Natural killer cell (primary cell): ENCODE measurements at regions of chr5 and their contacts with region 1.

Region 1: DNA sequence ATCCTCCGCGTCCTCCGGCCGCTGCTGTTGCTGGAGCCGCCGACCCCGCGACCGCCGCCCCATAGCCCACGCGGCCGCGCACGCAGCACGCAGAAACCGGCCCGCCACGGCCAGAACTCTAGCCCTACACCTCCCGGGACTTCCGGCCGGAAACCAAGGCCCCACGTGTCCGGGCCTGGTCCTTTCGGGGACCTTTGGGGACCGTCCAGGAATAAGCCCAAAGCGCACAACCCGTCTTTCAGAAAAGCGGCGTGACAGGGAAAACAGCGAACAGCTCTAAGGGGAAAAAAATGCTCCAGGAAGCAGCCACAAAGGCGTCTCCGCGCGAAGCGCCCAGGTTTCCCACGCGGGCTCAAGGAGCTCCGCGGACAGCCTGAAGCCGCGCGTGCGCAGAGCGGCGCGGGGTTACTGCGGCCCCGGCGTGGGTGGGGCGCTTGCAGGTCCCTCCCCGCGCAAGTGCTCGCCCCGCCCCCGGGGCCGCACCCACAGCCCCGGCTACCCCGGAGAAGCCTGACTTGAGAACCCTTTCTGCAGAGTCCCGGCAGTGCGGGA is at the starts of genes NSUN2 and SRD5A1:
- DNase-seq: peak; percentile 95 to 97
- ATAC-seq: peak; percentile 88 to 96 (median 89)
- H3K4me3 ChIP-seq: peak within 1 kb of the TSS; percentile 87
- H3K4me3 Mint-ChIP-seq: peak within 1 kb of the TSS; percentile 98
- H3K27ac ChIP-seq: peak within 1 kb of the TSS; percentile 100
- H3K27ac Mint-ChIP-seq: peak within 1 kb of the TSS; percentile 97 to 98
- H3K4me1 ChIP-seq: peaks cover 24% of the 10 kb centered on the region
- H3K4me1 Mint-ChIP-seq: peaks cover 46 to 50% of the 10 kb centered on the region in 2 donors
- H3K27me3 ChIP-seq: no peaks in the 10 kb centered on the region
- H3K27me3 Mint-ChIP-seq: no peaks in the 10 kb centered on the region
- CTCF ChIP-seq: no peak
- total RNA-seq, gene NSUN2: 61.3 to 87.4 (median 81.4) TPM
- total RNA-seq, gene SRD5A1: 6.5 to 11.0 (median 7.8) TPM

Region 2: GRCh38 chr5:5421961-5422818 is 1210.8 kb before region 1 on chr5 and contains the start of gene ICE1:
- intact Hi-C with region 1: loop called (anchors 1 kb)
- DNase-seq: peak; percentile 95 to 98
- ATAC-seq: peak; percentile 88 to 95 (median 88)
- H3K4me3 ChIP-seq: peak within 1 kb of the TSS; percentile 83
- H3K4me3 Mint-ChIP-seq: no peak within 1 kb of the TSS
- H3K27ac ChIP-seq: peak within 1 kb of the TSS; percentile 100
- H3K27ac Mint-ChIP-seq: no peak within 1 kb of the TSS
- H3K4me1 ChIP-seq: peaks cover 27% of the 10 kb centered on the region
- H3K4me1 Mint-ChIP-seq: peaks cover 18 to 19% of the 10 kb centered on the region in 2 donors
- H3K27me3 ChIP-seq: no peaks in the 10 kb centered on the region
- H3K27me3 Mint-ChIP-seq: no peaks in the 10 kb centered on the region
- CTCF ChIP-seq: no peak
- total RNA-seq, gene ICE1: 29.7 to 44.5 (median 36.6) TPM

Region 3: DNA sequence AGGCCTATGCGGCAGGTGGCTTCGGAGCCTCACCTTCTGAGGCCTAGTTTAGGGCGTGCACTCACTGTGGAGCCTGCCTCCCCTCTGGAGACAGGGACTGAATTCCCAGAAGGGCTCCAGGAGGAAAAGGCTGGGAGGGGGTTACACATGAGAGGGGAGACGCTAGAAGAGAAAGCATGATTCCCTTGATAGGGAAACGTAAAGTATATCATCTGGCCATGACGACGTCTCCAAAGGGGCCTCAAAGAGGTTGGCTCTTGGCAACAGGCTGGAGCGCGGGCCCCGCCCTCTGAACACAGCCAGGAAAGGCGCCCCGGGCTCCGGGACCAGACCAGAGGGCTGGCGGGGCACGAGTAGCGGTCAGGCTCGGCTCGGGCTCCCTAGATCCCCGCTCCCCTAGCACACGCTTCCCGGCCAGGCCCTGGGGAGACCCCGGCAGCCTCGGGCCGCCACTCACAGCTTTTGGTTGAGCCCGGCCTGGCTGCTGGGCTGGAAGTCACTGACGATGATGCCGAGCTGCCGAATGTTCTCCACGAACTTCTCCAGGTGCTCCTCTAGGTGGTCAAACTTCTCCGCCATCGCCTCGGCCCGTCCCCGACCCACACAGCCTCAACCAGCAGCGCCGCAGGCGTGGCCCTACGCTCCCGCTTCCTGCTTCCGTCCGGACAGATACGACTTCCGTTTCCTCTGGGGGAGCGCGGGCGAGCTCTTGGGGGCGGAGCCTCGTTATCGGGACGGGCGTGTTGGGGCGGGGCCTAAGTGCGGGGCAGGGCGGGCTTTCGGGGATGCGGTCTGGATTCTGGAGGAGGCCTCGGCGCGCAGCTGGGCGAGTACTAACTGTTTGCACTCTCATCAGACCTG is 254.9 kb before region 1 on chr5 and contains the start of gene MED10:
- intact Hi-C with region 1: loop called (anchors 5 kb)
- DNase-seq: peak; percentile 82 to 96
- ATAC-seq: peak; percentile 99
- H3K4me3 ChIP-seq: peak within 1 kb of the TSS; percentile 79
- H3K4me3 Mint-ChIP-seq: peak within 1 kb of the TSS; percentile 99
- H3K27ac ChIP-seq: peak within 1 kb of the TSS; percentile 71
- H3K27ac Mint-ChIP-seq: peak within 1 kb of the TSS; percentile 94 to 96
- H3K4me1 ChIP-seq: peaks cover 20% of the 10 kb centered on the region
- H3K4me1 Mint-ChIP-seq: peaks cover 48 to 54% of the 10 kb centered on the region in 2 donors
- H3K27me3 ChIP-seq: no peaks in the 10 kb centered on the region
- H3K27me3 Mint-ChIP-seq: peaks cover 6 to 19% of the 10 kb centered on the region in 2 donors
- CTCF ChIP-seq: no peak
- total RNA-seq, gene MED10: 64.4 to 68.5 (median 64.5) TPM

Region 4: DNA sequence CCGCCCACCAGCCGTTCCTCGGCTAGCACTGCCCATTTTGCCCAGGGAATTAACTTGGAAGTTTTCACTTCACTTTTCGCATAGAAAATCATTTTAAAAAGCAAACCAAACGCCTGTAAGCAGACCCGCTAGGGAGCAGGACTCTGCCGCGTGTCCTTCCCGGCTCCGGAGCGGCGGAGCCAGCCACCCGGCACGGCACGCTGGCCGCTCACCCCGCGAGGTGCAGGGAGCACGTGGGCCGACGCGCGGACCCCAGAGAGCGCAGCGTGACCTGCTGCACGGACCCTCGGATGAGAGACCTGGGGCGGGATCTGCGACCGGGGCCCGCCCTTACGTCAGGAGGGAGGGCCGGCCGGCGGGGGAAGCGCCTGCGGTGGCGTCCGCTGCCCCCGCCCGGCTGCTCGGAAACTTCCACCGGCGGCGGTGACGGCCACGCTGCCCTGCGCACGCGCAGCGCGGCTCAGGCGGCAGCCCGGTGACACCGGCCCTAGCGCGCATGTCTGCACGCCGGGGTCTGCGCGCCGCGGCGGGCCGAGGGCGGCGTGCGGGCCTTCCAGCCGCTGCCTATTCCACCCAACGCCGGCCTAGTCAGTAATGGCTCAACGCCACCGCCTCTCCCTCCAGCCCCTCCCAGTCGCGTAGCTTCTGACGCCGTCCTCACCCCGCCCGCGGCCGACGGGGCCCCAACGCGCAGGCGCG is 79.7 kb after region 1 on chr5:
- intact Hi-C with region 1: loop called (anchors 1 kb)
- DNase-seq: peak in 1 of 2 donors; percentile 97
- ATAC-seq: peak; percentile 75 to 89 (median 75)
- H3K4me3 ChIP-seq: peak overlapping the region; percentile 49
- H3K4me3 Mint-ChIP-seq: peak overlapping the region; percentile 91
- H3K27ac ChIP-seq: peak overlapping the region; percentile 80
- H3K27ac Mint-ChIP-seq: peak overlapping the region; percentile 88 to 89
- H3K4me1 ChIP-seq: peaks cover 36% of the 10 kb centered on the region
- H3K4me1 Mint-ChIP-seq: peaks cover 36 to 45% of the 10 kb centered on the region in 2 donors
- H3K27me3 ChIP-seq: peaks cover 2% of the 10 kb centered on the region
- H3K27me3 Mint-ChIP-seq: peaks cover 7 to 8% of the 10 kb centered on the region in 2 donors
- CTCF ChIP-seq: no peak

Region 5: DNA sequence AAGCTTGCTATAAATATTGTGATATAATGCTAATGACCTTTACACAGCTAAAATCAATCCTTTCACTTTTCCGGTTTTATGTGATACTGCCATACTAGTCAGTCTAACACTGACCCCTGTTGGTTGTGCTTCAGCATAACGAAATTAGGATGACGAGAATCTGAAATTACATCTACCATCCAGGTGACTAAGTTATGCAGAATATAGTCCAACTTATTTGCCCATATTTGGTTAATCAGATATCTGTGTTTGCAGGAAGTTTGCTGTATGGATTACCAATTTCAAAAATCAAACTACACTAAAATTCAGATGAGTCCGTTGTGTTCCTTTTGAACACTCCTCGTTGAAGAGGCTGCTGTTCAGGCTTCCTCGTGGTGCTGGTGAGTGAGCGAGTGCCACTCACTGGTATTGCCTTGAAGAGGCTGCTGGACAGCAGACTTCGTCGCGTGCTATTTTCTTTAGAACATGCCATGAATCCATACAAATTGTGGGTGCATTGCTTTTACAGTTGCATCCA is 112.8 kb after region 1 on chr5:
- intact Hi-C with region 1: loop called (anchors 1 kb)
- DNase-seq: peak in 1 of 2 donors; percentile 78
- ATAC-seq: peak; percentile 65 to 71 (median 67)
- H3K4me3 ChIP-seq: no peak overlapping the region
- H3K4me3 Mint-ChIP-seq: no peak overlapping the region
- H3K27ac ChIP-seq: no peak overlapping the region
- H3K27ac Mint-ChIP-seq: no peak overlapping the region
- H3K4me1 ChIP-seq: peaks cover 8% of the 10 kb centered on the region
- H3K4me1 Mint-ChIP-seq: peaks cover 4 to 6% of the 10 kb centered on the region in 2 donors
- H3K27me3 ChIP-seq: no peaks in the 10 kb centered on the region
- H3K27me3 Mint-ChIP-seq: no peaks in the 10 kb centered on the region
- CTCF ChIP-seq: peak; percentile 70